ENCODE measurements at regions of chr6 and their contacts with region 1.

Region 1: DNA sequence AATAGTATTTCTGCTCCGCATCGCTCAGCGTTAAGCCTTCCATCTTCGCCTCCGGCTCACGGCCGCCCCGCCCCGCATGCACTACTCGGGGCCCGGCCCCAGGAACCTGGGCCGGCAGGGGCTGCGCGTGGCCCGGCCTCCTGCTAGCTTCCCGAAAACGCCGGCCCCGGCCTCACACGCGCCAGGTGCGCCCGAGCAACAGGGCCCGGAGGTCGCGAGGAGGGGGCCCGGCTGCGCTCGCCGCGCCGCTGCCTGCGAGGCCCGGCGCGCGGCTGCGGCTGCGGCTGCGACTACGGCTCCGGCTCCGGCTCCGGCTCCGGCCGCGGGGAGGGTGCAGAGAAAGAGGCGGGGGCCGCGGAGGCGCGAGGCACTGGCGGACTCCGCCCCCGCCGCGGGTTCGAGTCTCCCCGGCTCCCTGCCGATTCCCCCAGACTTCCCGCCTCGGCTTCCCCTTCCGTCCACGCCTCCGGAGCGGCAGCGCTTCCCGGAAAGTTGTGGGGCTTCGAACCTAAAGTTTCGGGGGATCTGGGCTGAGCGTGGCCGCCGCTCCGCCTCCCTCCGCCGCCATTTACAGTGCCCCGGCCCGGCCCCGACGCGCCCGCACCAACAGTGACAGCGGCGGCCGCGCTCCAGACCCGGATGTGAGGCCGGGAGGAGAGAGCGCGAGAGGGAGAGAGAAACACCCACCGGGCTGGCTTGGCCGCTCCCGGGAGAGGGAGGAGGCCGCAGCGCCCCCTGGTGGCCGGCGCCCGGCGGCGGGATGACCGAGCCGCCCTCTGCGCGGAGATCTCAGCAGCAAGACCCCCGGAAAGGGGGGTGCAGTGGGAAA is at the start of gene REPS1:
- DNase-seq: peak; percentile 94
- ATAC-seq: peak; percentile 94
- H3K4me3 Mint-ChIP-seq: peak within 1 kb of the TSS; percentile 92
- H3K27ac Mint-ChIP-seq: peak within 1 kb of the TSS; percentile 91
- H3K4me1 Mint-ChIP-seq: peaks cover 7% of the 10 kb centered on the region
- H3K27me3 Mint-ChIP-seq: no peaks in the 10 kb centered on the region
- CTCF ChIP-seq: peak; percentile 91
- total RNA-seq, gene REPS1: 44.8 and 58.8 TPM in 2 replicates

Region 2: GRCh38 chr6:138588805-138589434 is 398.9 kb before region 1 on chr6:
- CTCF ChIA-PET with region 1: no interaction called
- POLR2A ChIA-PET with region 1: no interaction called
- intact Hi-C with region 1: loop called (anchors 1 kb)
- DNase-seq: no peak
- ATAC-seq: peak; percentile 48
- H3K4me3 Mint-ChIP-seq: no peak overlapping the region
- H3K27ac Mint-ChIP-seq: no peak overlapping the region
- H3K4me1 Mint-ChIP-seq: peaks cover 27% of the 10 kb centered on the region
- H3K27me3 Mint-ChIP-seq: no peaks in the 10 kb centered on the region
- CTCF ChIP-seq: peak; percentile 71

Region 3: GRCh38 chr6:138817822-138818308 is 170.0 kb before region 1 on chr6:
- CTCF ChIA-PET with region 1: interaction called, 25 read pairs
- POLR2A ChIA-PET with region 1: interaction called, 3 read pairs
- intact Hi-C with region 1: loop called (anchors 1 kb)
- DNase-seq: no peak
- ATAC-seq: no peak
- H3K4me3 Mint-ChIP-seq: no peak overlapping the region
- H3K27ac Mint-ChIP-seq: peak overlapping the region; percentile 70
- H3K4me1 Mint-ChIP-seq: peaks cover 32% of the 10 kb centered on the region
- H3K27me3 Mint-ChIP-seq: no peaks in the 10 kb centered on the region
- CTCF ChIP-seq: no peak

Region 4: DNA sequence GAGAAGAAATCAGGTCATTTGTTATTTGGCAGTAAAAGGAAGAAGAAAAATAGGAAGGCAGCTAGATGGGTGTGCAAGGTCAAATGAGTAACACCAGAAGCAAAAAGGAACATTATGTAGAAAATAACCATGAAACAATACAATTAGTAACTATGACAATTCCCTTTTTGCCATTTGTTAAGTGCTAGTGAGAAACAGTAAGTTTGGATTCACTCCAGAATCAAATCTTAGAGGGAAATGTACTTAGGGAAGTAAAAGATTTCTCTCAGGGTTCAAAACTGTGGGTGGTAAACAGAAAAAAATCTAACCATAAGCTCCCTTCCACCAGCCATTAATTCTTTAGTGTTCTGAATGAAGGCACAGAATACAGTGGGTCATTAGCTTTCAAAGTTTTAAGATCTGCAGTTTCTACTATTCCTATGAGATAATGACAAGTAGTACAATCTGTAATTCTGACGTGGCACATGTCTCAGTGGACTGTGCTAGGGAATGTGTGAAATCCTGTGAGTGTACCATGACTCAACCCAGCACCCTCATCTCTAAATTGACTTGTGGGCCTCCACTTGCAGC is 16.9 kb before region 1 on chr6:
- CTCF ChIA-PET with region 1: interaction called, 3 read pairs
- POLR2A ChIA-PET with region 1: interaction called, 3 read pairs
- intact Hi-C with region 1: loop called (anchors 1 kb)
- DNase-seq: no peak
- ATAC-seq: peak; percentile 25
- H3K4me3 Mint-ChIP-seq: no peak overlapping the region
- H3K27ac Mint-ChIP-seq: no peak overlapping the region
- H3K4me1 Mint-ChIP-seq: peaks cover 53% of the 10 kb centered on the region
- H3K27me3 Mint-ChIP-seq: no peaks in the 10 kb centered on the region
- CTCF ChIP-seq: no peak

Region 5: DNA sequence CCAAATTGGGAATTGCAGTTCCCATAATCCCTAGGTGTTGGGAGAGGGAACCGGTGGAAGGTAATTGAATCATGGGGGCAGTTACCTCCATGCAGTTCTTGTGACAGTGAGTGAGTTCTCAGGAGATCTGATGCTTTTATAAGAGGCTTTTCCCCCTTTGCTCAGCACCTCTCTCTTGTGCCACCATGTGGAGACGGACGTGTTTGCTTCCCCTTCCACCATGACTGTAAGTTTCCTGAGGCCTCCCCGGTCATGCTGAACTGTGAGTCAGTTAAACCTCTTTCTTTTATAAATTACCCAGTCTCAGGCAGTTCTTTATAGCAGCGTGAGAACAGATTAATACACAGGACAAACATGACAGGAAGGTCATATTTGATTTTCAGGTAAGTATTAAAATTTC is 121.7 kb after region 1 on chr6:
- CTCF ChIA-PET with region 1: interaction called, 3 read pairs
- POLR2A ChIA-PET with region 1: no interaction called
- intact Hi-C with region 1: loop called (anchors 5 kb)
- DNase-seq: no peak
- ATAC-seq: peak; percentile 34
- H3K4me3 Mint-ChIP-seq: no peak overlapping the region
- H3K27ac Mint-ChIP-seq: no peak overlapping the region
- H3K4me1 Mint-ChIP-seq: no peaks in the 10 kb centered on the region
- H3K27me3 Mint-ChIP-seq: no peaks in the 10 kb centered on the region
- CTCF ChIP-seq: no peak

Region 6: DNA sequence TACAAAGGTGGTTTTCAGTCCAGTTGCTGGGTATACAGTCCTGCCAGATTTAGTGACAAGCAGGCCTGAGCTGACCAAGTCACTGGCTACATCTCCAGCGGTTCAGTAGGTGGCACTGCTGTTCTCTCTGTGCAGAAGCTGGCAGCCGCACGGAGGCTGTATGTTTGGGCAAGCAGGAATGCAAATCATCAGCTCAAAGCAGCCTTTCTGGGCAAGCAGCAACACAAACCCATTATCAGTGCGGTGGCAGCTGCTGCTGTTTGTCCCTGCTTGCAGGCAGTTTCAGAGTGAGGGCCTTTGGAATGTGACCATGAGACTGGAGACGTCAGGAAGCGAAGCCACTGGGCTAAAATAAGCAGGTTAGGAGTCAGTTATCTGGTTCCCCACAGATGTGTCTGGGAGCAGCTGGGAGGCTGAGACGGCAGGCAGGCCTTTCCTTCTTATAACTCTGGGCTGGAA is 231.4 kb after region 1 on chr6:
- CTCF ChIA-PET with region 1: interaction called, 3 read pairs
- POLR2A ChIA-PET with region 1: no interaction called
- intact Hi-C with region 1: loop called (anchors 1 kb)
- DNase-seq: peak; percentile 52
- ATAC-seq: peak; percentile 100
- H3K4me3 Mint-ChIP-seq: peak overlapping the region; percentile 24
- H3K27ac Mint-ChIP-seq: peak overlapping the region; percentile 73
- H3K4me1 Mint-ChIP-seq: peaks cover 12% of the 10 kb centered on the region
- H3K27me3 Mint-ChIP-seq: no peaks in the 10 kb centered on the region
- CTCF ChIP-seq: no peak